Heart left ventricle (tissue), 16 donors: ENCODE measurements at regions of chr19 and their contacts with region 1.

Region 1: DNA sequence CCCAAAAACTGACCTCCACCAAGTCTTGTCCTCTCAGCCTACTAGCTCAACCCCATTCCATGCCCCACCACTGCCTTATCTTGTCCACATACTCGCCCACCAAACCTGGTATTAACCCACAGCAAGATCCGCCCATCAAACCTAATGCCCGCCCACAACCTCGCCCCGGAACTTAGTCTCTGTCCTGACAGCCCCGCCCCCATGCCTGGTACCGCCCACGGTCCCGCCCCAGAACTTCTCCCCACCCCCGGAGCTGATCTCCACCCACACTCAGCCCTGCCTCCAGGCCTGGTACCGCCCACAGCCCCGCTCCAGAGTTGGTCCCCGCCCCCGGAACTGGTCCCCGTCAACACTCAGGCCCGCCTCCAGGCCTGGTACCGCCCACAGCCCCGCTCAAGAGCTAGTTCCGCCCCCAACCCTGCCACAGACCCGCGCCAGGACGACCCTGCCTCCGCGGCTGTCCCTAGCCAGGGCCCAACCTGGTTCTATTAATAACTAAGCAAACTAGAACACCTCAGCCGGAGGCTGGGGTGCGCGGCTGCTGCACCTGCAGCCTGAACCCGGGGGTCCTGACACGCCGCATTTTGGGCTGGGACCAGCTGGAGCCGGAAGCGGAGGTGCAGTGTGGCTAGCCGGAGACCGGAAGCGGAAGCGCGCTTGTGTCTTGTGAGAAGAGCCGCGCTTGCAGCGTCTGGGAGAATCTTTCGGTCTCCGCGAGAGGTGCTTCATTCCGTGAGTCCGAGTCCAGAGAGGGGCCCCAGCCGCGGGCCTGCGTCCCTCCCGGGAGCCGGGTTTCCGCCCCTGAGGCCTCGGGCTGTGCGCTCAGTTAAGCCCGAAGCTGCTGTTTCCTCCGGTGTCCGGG is at the start of gene ZNF557:
- DNase-seq: peak; percentile 99 to 100 (median 99)
- ATAC-seq: peak; percentile 100
- H3K4me3 ChIP-seq: peak within 1 kb of the TSS; percentile 74 to 99 (median 88)
- H3K27ac ChIP-seq: peak within 1 kb of the TSS in 11 of 12 donors; percentile 76 to 94 (median 88)
- H3K4me1 ChIP-seq: peaks cover 0 to 15% (median 9%) of the 10 kb centered on the region in 12 donors
- H3K27me3 ChIP-seq: no peaks in the 10 kb centered on the region
- CTCF ChIP-seq: no peak
- POLR2A ChIP-seq: peak in 1 of 2 donors; percentile 66
- total RNA-seq, gene ZNF557: 3.1 to 7.1 (median 3.9) TPM

Region 2: GRCh38 chr19:7098701-7099596 is 29.7 kb after region 1 on chr19:
- intact Hi-C with region 1: loop called in 1 of 10 experiments (anchors 1 kb)
- DNase-seq: peak; percentile 92 to 96 (median 94)
- ATAC-seq: peak; percentile 94 to 97 (median 96)
- H3K4me3 ChIP-seq: peak overlapping the region; percentile 30 to 91 (median 63)
- H3K27ac ChIP-seq: peak overlapping the region; percentile 91 to 98 (median 92)
- H3K4me1 ChIP-seq: peaks cover 0 to 12% (median 4%) of the 10 kb centered on the region in 12 donors
- H3K27me3 ChIP-seq: no peaks in the 10 kb centered on the region
- CTCF ChIP-seq: no peak
- POLR2A ChIP-seq: peak in 1 of 2 donors; percentile 57

Region 3: GRCh38 chr19:7191946-7192691 is 122.8 kb after region 1 on chr19:
- intact Hi-C with region 1: no loop called
- DNase-seq: no peak
- ATAC-seq: no peak
- H3K4me3 ChIP-seq: no peak overlapping the region
- H3K27ac ChIP-seq: peak overlapping the region in 4 of 12 donors; percentile 0 to 24 (median 2)
- H3K4me1 ChIP-seq: peaks cover 0 to 51% (median 26%) of the 10 kb centered on the region in 12 donors
- H3K27me3 ChIP-seq: no peaks in the 10 kb centered on the region
- CTCF ChIP-seq: no peak
- POLR2A ChIP-seq: no peak

Region 4: DNA sequence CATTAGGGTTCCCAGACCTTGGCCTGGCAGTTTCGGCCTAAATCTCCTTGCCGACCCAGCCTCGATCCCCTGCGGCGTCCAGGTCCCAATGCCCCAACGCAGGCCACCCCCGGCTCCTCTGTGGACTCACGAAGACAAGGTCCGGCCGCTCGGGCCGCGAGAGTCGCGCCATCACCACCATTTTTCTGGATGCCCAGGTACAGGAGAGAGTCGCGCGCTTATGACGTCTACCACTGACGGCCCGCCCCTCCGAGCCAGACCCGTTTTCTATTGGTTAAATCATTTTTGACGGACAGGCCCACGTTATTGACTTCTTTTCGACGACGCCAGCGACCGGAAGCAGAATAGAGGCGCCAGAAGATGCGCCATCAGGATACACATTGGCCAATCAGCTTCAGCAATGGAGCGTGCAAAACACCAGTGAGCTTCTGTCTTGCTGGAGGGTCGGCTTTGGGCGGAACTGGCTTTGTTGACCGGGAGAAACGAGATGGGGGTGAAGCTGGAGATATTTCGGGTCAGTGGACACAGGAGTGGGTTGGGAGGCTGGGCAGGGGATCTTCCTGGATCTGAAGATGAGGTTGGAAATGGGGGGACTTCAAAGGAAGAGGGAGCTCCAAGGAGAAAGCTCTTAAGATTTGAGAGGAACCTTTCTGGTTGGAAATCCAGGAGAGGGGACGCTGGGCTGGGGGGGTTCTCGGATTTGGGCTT is 560.2 kb after region 1 on chr19 and contains the starts of genes PET100 and XAB2:
- intact Hi-C with region 1: loop called in 1 of 10 experiments (anchors 5 kb)
- DNase-seq: peak; percentile 95 to 98 (median 97)
- ATAC-seq: peak; percentile 98 to 99 (median 99)
- H3K4me3 ChIP-seq: peak within 1 kb of the TSS; percentile 62 to 100 (median 92)
- H3K27ac ChIP-seq: peak within 1 kb of the TSS in 11 of 12 donors; percentile 53 to 87 (median 78)
- H3K4me1 ChIP-seq: peaks cover 3 to 36% (median 25%) of the 10 kb centered on the region in 12 donors
- H3K27me3 ChIP-seq: no peaks in the 10 kb centered on the region
- CTCF ChIP-seq: no peak
- POLR2A ChIP-seq: peak in 1 of 2 donors; percentile 75
- total RNA-seq, gene PET100: 22.3 to 185 (median 136) TPM
- total RNA-seq, gene XAB2: 16.3 to 36.2 (median 23.6) TPM

Region 5: DNA sequence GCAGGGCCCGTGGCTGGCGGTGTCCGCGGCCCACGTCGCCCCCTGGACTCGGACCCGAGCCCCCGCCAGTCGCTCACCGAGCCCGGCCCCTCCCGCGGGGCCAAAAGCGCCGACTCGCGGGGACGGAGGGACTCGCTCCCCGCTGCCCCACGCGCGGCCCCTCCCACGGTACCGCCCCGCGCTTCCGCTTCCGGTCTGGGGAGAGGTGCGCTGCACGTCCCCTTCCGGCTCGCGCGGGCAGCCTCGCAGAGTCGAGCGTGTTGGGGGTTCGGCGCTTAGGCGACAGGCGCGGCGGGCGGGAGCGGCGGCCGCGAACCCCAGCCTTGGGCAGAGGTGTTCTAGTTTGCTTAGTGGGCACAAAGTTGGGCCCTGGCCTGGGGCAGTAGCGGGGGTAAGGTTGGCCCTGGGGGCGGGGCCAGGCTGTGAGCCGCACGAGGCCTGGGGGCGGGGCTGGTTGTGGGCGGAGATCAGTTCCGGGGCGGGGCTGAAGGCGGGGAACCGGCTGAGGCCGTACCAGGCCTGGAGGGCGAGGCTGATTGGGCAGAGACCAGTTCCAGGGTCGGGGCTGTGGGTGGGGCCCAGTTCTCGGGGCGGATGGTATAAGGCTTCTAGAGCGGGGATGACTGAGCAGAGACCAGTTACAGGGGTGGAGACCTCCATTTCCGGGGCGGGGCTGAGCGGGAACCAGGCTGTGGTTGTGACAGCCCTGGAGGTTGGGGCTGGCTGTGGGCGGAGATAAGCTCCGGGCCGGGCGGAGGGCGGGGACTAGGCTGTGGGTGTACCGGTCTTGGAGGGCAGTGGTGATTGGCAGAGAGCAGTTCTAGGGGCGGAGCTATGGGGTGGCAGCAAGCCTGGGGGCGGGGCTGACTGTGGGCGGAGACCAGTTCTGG is 1763.1 kb after region 1 on chr19 and contains the starts of genes MBD3L1 and ZNF558:
- intact Hi-C with region 1: loop called in 1 of 10 experiments (anchors 10 kb)
- DNase-seq: peak; percentile 99 to 100 (median 99)
- ATAC-seq: peak; percentile 97 to 98 (median 98)
- H3K4me3 ChIP-seq: peak within 1 kb of the TSS; percentile 74 to 98 (median 90)
- H3K27ac ChIP-seq: peak within 1 kb of the TSS; percentile 31 to 98 (median 94)
- H3K4me1 ChIP-seq: peaks cover 0 to 12% (median 9%) of the 10 kb centered on the region in 12 donors
- H3K27me3 ChIP-seq: no peaks in the 10 kb centered on the region
- CTCF ChIP-seq: peak in 10 of 12 donors; percentile 11 to 70 (median 42)
- POLR2A ChIP-seq: peak in 1 of 2 donors; percentile 82
- total RNA-seq, gene MBD3L1: not detected
- total RNA-seq, gene ZNF558: 7.2 to 16.2 (median 11.2) TPM